Natural killer cell (primary cell): ENCODE measurements at regions of chr22 and their contacts with region 1.

Region 1: DNA sequence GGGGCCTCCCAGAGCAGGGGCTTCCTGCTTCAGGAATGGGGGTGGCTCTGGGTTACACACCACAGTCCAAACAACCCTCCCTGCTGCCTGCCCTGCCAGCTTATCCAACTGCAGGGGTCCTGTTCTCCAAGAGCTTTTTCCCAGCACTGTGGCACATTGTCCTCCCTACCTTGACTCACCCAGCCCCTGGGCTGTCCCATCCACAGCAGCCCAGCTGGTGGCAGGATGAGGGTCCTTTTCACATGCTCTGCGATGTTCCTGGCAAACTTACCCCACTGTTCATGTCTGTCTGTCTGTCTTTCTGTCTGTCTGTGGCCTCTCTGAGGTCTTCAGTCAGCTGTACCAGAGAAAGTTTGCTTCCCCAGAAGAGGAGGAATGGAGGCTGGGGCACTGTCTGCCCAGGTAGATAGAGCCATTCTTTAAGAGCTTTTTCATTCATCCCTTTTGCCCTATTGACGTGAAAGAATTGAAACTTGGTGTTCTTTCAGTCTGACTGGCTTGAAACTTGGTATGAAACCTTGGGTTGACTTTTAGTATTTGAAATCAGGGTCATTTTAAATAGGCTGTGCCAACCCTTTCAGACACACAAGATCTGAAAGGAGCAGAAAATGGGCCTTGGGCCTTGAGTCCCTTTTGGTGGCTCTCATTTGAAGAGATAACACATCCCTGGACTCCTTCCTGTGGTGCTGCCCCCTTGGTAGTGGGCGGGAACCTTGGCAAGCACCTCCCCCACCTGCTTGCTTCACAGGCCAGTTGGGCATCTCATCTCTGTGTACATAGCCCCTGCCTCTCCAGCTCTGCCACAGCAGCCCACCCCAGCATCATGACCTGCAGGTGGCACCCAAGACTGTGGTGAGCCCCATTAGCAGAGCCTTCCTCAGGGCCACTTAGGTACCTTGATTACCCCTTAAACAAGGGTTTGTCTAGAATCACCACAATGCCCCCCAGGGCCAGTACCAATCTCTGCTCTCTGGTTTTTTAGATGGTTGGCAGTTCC is 74.6 kb upstream of the SUSD2 start:
- DNase-seq: peak; percentile 24 to 66
- ATAC-seq: peak in 2 of 3 donors; percentile 60 to 69
- H3K4me3 ChIP-seq: no peak overlapping the region
- H3K4me3 Mint-ChIP-seq: no peak overlapping the region
- H3K27ac ChIP-seq: no peak overlapping the region
- H3K27ac Mint-ChIP-seq: peak overlapping the region in 1 of 2 donors; percentile 60
- H3K4me1 ChIP-seq: no peaks in the 10 kb centered on the region
- H3K4me1 Mint-ChIP-seq: no peaks in the 10 kb centered on the region
- H3K27me3 ChIP-seq: no peaks in the 10 kb centered on the region
- H3K27me3 Mint-ChIP-seq: no peaks in the 10 kb centered on the region
- CTCF ChIP-seq: peak; percentile 26

Region 2: DNA sequence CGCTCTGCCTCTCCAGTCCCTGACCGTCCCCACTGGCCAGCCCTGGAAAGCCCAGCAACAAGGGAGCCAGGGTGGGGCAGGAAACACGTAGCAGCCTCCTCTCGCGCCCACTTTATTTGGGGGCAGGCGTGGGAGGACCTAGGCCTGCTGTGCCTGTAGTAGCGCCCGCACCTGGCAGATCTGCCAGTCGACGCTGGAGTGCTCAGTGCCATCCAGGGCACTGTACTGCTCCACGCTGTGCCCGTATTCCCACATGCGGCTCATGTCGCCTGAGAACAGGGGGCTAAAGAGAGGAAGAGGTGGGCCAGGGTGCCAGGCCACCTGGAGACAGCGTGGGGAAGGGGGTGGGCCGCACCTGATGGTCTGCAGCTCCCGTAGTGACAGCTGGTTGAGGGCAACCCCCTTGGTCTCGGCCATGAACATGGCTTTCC is 457.6 kb before region 1 on chr22:
- intact Hi-C with region 1: no loop called
- DNase-seq: no peak
- ATAC-seq: no peak
- H3K4me3 ChIP-seq: no peak overlapping the region
- H3K4me3 Mint-ChIP-seq: no peak overlapping the region
- H3K27ac ChIP-seq: no peak overlapping the region
- H3K27ac Mint-ChIP-seq: no peak overlapping the region
- H3K4me1 ChIP-seq: no peaks in the 10 kb centered on the region
- H3K4me1 Mint-ChIP-seq: no peaks in the 10 kb centered on the region
- H3K27me3 ChIP-seq: no peaks in the 10 kb centered on the region
- H3K27me3 Mint-ChIP-seq: no peaks in the 10 kb centered on the region
- CTCF ChIP-seq: no peak

Region 3: DNA sequence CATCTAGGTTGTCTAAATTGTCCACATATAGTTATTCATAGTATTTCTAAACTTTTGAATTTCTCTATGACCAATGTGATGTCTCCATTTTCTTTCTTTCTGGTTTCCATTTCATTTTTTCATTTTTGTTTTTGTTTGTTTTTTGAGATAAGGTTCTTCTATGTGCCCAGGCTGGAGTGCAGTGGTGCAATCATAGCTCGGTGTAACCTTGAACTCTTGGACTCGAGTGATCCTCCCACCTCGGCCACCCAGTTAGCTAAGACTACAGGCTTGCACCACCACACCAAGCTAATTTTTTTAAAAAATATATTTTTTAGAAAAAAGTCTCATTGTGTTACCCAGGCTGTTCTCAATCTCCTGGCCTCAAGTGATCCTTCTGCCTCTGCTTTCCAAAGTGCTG is 109.6 kb before region 1 on chr22:
- intact Hi-C with region 1: no loop called
- DNase-seq: peak in 1 of 2 donors; percentile 0
- ATAC-seq: no peak
- H3K4me3 ChIP-seq: no peak overlapping the region
- H3K4me3 Mint-ChIP-seq: no peak overlapping the region
- H3K27ac ChIP-seq: no peak overlapping the region
- H3K27ac Mint-ChIP-seq: no peak overlapping the region
- H3K4me1 ChIP-seq: no peaks in the 10 kb centered on the region
- H3K4me1 Mint-ChIP-seq: no peaks in the 10 kb centered on the region
- H3K27me3 ChIP-seq: no peaks in the 10 kb centered on the region
- H3K27me3 Mint-ChIP-seq: peaks cover 0 to 15% of the 10 kb centered on the region in 2 donors
- CTCF ChIP-seq: no peak

Region 4: GRCh38 chr22:24146194-24146616 is 39.5 kb after region 1 on chr22:
- intact Hi-C with region 1: no loop called
- DNase-seq: peak in 1 of 2 donors; percentile 58
- ATAC-seq: peak; percentile 71 to 76 (median 74)
- H3K4me3 ChIP-seq: no peak overlapping the region
- H3K4me3 Mint-ChIP-seq: peak overlapping the region; percentile 69
- H3K27ac ChIP-seq: peak overlapping the region; percentile 67
- H3K27ac Mint-ChIP-seq: peak overlapping the region; percentile 81 to 86
- H3K4me1 ChIP-seq: peaks cover 63% of the 10 kb centered on the region
- H3K4me1 Mint-ChIP-seq: peaks cover 30 to 48% of the 10 kb centered on the region in 2 donors
- H3K27me3 ChIP-seq: no peaks in the 10 kb centered on the region
- H3K27me3 Mint-ChIP-seq: no peaks in the 10 kb centered on the region
- CTCF ChIP-seq: no peak

Region 5: DNA sequence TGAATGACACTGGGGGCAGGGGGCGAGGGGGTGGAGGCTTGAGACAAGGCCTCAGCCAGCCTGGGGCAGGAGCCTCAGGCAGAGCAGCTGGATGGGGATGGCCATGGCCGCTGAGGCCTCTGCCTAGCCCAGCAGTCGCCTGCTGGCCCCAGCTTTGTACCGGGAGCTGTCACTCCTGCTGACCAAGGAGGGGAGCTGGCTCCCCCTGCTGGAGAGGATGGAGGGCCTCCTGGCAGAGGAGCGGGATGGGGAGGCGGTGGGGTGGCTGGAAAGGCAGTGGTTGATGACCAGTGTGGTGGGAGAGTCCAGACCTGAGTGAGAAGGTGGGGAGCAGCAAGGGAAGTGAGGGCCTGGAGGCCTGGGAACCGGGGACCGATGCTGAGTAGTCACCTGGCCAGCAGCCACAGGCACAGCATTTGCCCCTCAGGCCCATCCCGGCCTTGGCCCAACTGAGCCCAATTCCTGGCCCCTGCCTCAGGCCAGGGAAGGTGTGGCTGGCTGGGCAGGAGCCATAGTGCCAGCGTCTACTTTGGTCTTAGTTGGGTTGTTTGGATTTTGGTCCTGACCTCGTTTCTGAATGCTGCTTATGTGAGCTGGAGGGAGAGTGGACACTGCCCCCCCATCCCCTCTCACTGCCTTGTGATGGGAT is 68.6 kb after region 1 on chr22:
- intact Hi-C with region 1: loop called (anchors 1 kb)
- DNase-seq: peak; percentile 58 to 79
- ATAC-seq: peak; percentile 62 to 79 (median 76)
- H3K4me3 ChIP-seq: no peak overlapping the region
- H3K4me3 Mint-ChIP-seq: no peak overlapping the region
- H3K27ac ChIP-seq: no peak overlapping the region
- H3K27ac Mint-ChIP-seq: peak overlapping the region in 1 of 2 donors; percentile 68
- H3K4me1 ChIP-seq: peaks cover 15% of the 10 kb centered on the region
- H3K4me1 Mint-ChIP-seq: peaks cover 0 to 16% of the 10 kb centered on the region in 2 donors
- H3K27me3 ChIP-seq: no peaks in the 10 kb centered on the region
- H3K27me3 Mint-ChIP-seq: no peaks in the 10 kb centered on the region
- CTCF ChIP-seq: peak; percentile 50